HepG2 (cell line): ENCODE measurements at regions of chr18 and their contacts with region 1.

Region 1: GRCh38 chr18:36015629-36016028 is 43.1 kb downstream of the RMP24 start:
- DNase-seq: no peak
- ATAC-seq: no peak
- H3K4me3 ChIP-seq: no peak overlapping the region
- H3K27ac ChIP-seq: no peak overlapping the region
- H3K4me1 ChIP-seq: no peaks in the 10 kb centered on the region
- H3K27me3 ChIP-seq: no peaks in the 10 kb centered on the region
- CTCF ChIP-seq: no peak
- EP300 ChIP-seq: no peak
- POLR2A ChIP-seq: no peak
- RAD21 ChIP-seq: no peak

Region 2: DNA sequence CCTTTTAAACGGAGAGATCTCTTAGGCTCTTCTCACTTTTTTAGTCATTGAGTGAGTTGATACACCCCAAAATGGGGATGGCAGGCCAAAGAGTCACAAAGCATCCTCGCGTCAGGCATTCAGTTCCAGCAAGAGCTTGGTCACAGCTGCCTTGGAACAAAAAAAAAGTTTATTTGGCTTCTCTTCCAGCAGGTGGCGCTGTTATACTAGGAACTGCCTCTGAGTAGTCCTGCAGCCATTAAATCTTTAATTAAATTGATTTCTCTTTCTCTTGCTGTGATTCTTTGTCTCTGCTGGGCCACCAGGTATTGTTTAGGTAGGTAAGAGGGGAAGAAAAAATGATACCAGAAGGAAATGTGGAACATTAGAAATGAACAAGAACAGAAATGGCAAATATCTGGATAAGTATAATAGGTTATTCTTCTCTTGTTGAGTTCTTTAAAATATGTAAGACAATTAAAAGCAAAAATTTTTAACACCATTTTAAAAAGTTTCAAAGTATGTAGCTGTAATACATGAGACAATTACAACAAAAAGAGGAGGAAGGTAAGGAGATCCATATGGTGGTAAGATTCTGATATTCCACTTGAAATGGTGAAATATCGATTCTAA is 259.0 kb before region 1 on chr18:
- CTCF ChIA-PET with region 1: interaction called, 3 read pairs
- POLR2A ChIA-PET with region 1: no interaction called
- in situ Hi-C with region 1: no loop called
- intact Hi-C with region 1: loop called (anchors 2 kb)
- DNase-seq: peak; percentile 45
- ATAC-seq: peak; percentile 91
- H3K4me3 ChIP-seq: no peak overlapping the region
- H3K27ac ChIP-seq: no peak overlapping the region
- H3K4me1 ChIP-seq: peaks cover 12% of the 10 kb centered on the region
- H3K27me3 ChIP-seq: peaks cover 4 to 26% of the 10 kb centered on the region in 2 experiments; a peak in 3 of 5 replicates
- CTCF ChIP-seq: peak; percentile 78
- EP300 ChIP-seq: no peak
- POLR2A ChIP-seq: no peak
- RAD21 ChIP-seq: peak; percentile 75

Region 3: DNA sequence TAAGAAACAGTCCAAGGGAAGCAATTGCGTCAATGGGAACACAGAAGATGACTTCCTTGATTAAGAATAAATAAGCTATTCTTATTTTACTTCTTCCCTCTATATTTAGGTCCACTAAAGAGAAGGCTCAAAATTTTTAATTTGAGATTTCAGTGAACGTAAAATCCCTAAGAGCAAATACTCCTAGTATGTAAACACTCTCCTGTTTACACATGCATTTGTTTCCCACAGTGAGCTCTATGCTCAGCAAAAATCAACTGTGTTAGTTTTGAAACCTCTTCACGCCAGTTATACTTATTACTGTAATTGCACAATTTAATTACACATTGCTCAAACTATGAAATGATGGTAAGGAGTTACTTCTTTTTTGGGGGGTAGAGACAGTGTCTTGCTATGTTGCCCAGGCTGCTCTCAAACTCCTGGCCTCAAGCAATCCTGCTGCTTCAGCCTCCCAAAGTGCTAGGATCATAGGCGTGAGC is 104.7 kb after region 1 on chr18:
- CTCF ChIA-PET with region 1: no interaction called
- POLR2A ChIA-PET with region 1: no interaction called
- in situ Hi-C with region 1: no loop called
- intact Hi-C with region 1: no loop called
- DNase-seq: no peak
- ATAC-seq: no peak
- H3K4me3 ChIP-seq: no peak overlapping the region
- H3K27ac ChIP-seq: no peak overlapping the region
- H3K4me1 ChIP-seq: peaks cover 5% of the 10 kb centered on the region; the same call in 1 of the 2 replicates
- H3K27me3 ChIP-seq: no peaks in the 10 kb centered on the region
- CTCF ChIP-seq: no peak
- EP300 ChIP-seq: no peak
- POLR2A ChIP-seq: no peak
- RAD21 ChIP-seq: no peak

Region 4: GRCh38 chr18:36279001-36279400 is 263.4 kb after region 1 on chr18:
- CTCF ChIA-PET with region 1: interaction called, 6 read pairs
- POLR2A ChIA-PET with region 1: no interaction called
- in situ Hi-C with region 1: loop called (anchors 10 kb)
- intact Hi-C with region 1: loop called (anchors 1 kb)
- DNase-seq: no peak
- ATAC-seq: no peak
- H3K4me3 ChIP-seq: no peak overlapping the region
- H3K27ac ChIP-seq: no peak overlapping the region
- H3K4me1 ChIP-seq: 0 out of 2 replicates have a peak, but pooled peaks cover under 1% of the 10 kb centered on the region
- H3K27me3 ChIP-seq: no peaks in the 10 kb centered on the region
- CTCF ChIP-seq: no peak
- EP300 ChIP-seq: no peak
- POLR2A ChIP-seq: no peak
- RAD21 ChIP-seq: no peak

Region 5: DNA sequence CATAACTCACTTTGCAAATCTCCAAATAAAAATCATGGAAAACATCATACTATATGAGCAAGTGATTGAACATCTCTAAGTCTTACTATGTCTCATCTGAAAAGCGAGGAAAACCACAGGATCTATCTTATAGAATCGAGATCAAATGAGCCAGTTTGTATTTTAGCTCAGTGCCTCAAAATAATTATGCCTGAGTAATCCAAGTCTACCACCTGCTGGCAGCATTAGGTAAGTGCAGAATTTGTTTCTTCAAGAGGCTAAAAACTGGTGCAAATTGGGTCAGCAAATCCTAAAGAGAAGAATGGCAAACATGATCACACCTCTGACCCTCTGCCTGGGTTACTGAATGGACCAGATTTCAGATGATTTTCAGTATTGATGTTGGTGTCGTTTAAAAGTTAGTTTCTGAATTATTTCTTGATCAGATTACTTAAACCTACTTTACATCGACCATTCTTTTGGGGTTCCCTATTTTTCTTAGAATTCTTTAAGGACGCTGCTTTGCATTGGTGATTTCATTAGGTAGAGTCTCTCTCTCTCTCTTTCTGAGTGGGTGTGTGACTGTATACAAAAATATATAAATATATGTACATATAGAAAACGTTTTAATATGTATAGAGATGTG is 269.2 kb after region 1 on chr18:
- CTCF ChIA-PET with region 1: interaction called, 6 read pairs
- POLR2A ChIA-PET with region 1: no interaction called
- in situ Hi-C with region 1: loop called (anchors 10 kb)
- intact Hi-C with region 1: loop called (anchors 1 kb)
- DNase-seq: peak; percentile 62
- ATAC-seq: peak; percentile 53
- H3K4me3 ChIP-seq: no peak overlapping the region
- H3K27ac ChIP-seq: no peak overlapping the region
- H3K4me1 ChIP-seq: 0 out of 2 replicates have a peak, but pooled peaks cover 7% of the 10 kb centered on the region
- H3K27me3 ChIP-seq: no peaks in the 10 kb centered on the region
- CTCF ChIP-seq: peak; percentile 86
- EP300 ChIP-seq: no peak
- POLR2A ChIP-seq: no peak
- RAD21 ChIP-seq: peak; percentile 81

Region 6: GRCh38 chr18:36757081-36757480 is 741.5 kb after region 1 on chr18:
- CTCF ChIA-PET with region 1: no interaction called
- POLR2A ChIA-PET with region 1: no interaction called
- in situ Hi-C with region 1: no loop called
- intact Hi-C with region 1: loop called (anchors 2 kb)
- DNase-seq: peak; percentile 48
- ATAC-seq: peak; percentile 71
- H3K4me3 ChIP-seq: no peak overlapping the region
- H3K27ac ChIP-seq: no peak overlapping the region
- H3K4me1 ChIP-seq: 0 out of 2 replicates have a peak, but pooled peaks cover 6% of the 10 kb centered on the region
- H3K27me3 ChIP-seq: no peaks in the 10 kb centered on the region
- CTCF ChIP-seq: peak; percentile 72
- EP300 ChIP-seq: no peak
- POLR2A ChIP-seq: no peak
- RAD21 ChIP-seq: peak; percentile 32; the same call in 1 of the 2 replicates